HEK293T (cell line): ENCODE measurements at regions of chr7 and their contacts with region 1.

Region 1: GRCh38 chr7:33807779-33808482 is 97.4 kb upstream of the BMPER start:
- DNase-seq: peak; percentile 67

Region 2: GRCh38 chr7:33536398-33537103 is 271.4 kb before region 1 on chr7:
- CTCF ChIA-PET with region 1: interaction called, 15 read pairs
- POLR2A ChIA-PET with region 1: no interaction called
- DNase-seq: no peak

Region 3: DNA sequence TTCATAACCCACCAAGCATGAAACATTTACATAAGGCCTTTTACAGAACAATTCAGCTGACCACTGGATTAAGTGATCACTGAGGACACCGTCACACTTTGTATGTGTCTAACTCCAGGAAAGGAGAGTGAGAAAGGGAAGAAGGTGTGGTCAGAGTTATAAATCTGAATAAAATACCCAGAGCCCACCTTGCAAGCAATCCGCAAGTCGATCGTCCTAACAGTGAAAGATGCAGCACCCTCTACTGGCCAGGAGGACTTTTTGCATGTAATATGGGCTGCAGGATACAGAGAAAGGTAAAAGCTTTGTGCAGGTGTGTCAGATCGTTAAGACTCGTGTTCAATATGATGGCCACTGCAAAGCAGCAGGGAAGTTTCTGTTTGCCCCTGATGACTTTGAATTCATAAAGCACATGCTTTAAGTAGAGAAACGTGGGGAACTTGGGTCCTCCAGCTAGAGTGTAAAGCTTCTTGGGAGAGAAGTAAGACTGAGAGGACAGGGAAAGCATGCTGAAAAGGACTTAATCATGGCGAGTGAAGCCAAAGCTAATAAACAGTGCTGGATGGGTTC is 28.9 kb after region 1 on chr7:
- CTCF ChIA-PET with region 1: interaction called, 10 read pairs
- POLR2A ChIA-PET with region 1: no interaction called
- DNase-seq: peak; percentile 20

Region 4: DNA sequence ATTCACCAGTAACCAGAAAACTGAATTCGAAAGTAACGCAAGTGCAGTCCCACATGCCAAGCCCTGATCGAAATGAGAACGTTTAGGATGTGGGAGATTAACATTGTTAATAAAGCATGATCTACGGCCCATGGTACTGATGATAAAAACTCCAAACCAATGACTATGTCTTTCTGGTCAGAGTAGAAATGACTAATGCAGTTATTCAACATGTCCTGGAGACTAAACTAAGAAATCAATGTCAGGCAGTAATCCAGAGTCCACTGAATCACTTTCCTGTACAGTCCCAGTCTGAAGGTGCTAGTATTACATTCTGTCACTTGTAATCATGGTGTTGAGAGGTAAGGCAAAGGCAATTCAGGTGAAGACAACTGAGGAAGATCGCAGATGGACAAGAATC is 864.5 kb after region 1 on chr7:
- CTCF ChIA-PET with region 1: no interaction called
- POLR2A ChIA-PET with region 1: no interaction called
- DNase-seq: no peak